GM12878 (cell line): ENCODE measurements at regions of chr5 and their contacts with region 1.

Region 1: DNA sequence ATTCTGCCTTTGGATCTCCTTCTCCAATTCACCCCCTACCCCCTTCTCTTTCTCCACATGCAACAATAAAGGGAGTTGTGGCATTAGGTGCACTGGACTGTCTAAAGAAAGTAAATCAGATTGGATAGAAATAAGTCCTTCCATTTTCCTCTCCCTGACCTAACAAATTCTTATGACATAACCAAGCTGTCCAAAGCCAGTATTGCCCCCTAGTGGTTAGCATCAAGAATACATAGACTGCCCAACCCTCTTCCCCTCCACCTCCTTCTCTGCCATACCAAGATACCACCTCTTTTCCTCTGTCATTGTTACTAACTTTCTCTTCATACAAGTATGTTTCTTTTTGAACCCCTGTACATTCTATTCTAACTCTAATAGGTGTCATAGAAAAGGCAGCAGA is 45.7 kb downstream of the PPARGC1B start:
- DNase-seq: peak; percentile 23
- ATAC-seq: peak; percentile 72
- H3K4me3 ChIP-seq: no peak overlapping the region
- H3K27ac ChIP-seq: peak overlapping the region; percentile 67
- H3K4me1 ChIP-seq: peaks cover 55% of the 10 kb centered on the region
- H3K27me3 ChIP-seq: no peaks in the 10 kb centered on the region
- CTCF ChIP-seq: peak; percentile 62 to 72 (median 63)
- EP300 ChIP-seq: no peak
- POLR2A ChIP-seq: no peak
- RAD21 ChIP-seq: peak; percentile 51

Region 2: DNA sequence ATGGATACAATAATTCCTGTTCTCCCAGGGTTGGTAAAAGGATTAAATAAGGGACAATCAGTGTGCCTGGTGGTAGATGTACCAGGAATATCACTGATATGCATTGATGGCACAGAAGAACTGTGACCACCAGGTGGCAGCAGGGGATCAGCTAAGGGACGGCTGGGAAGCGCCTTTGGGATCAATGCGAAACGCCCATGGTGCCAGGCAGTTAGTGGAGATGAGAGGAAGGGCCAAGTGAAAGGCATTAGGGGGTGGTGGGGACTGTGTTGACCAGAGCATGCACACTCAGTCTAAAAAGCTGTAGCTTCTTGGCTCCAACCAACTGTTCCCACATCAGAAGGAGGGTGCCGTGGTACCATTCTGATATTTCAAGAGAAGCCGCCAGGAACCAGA is 138.9 kb before region 1 on chr5:
- CTCF ChIA-PET with region 1: interaction called, 30 read pairs
- POLR2A ChIA-PET with region 1: interaction called, 3 read pairs
- RAD21 ChIA-PET with region 1: interaction called, 14 read pairs
- SMC1A ChIA-PET with region 1: interaction called, 7 read pairs
- in situ Hi-C with region 1: no loop called
- intact Hi-C with region 1: loop called (anchors 5 kb)
- DNase-seq: no peak
- ATAC-seq: peak; percentile 85
- H3K4me3 ChIP-seq: no peak overlapping the region
- H3K27ac ChIP-seq: no peak overlapping the region
- H3K4me1 ChIP-seq: peaks cover 12% of the 10 kb centered on the region
- H3K27me3 ChIP-seq: no peaks in the 10 kb centered on the region
- CTCF ChIP-seq: peak; percentile 74 to 78 (median 77)
- EP300 ChIP-seq: no peak
- POLR2A ChIP-seq: no peak
- RAD21 ChIP-seq: peak; percentile 87

Region 3: GRCh38 chr5:149680810-149681221 is 95.0 kb before region 1 on chr5:
- CTCF ChIA-PET with region 1: interaction called, 10 read pairs
- POLR2A ChIA-PET with region 1: interaction called, 5 read pairs
- RAD21 ChIA-PET with region 1: interaction called, 5 read pairs
- SMC1A ChIA-PET with region 1: interaction called, 5 read pairs
- in situ Hi-C with region 1: no loop called
- intact Hi-C with region 1: no loop called
- DNase-seq: peak; percentile 84
- ATAC-seq: peak; percentile 99
- H3K4me3 ChIP-seq: no peak overlapping the region
- H3K27ac ChIP-seq: peak overlapping the region; percentile 45
- H3K4me1 ChIP-seq: peaks cover 28% of the 10 kb centered on the region
- H3K27me3 ChIP-seq: peaks cover 0 to under 1% of the 10 kb centered on the region in 2 experiments; a peak in 1 of 4 replicates
- CTCF ChIP-seq: no peak
- EP300 ChIP-seq: peak; percentile 32 to 90; a peak in 3 of 4 replicates
- POLR2A ChIP-seq: no peak
- RAD21 ChIP-seq: no peak

Region 4: DNA sequence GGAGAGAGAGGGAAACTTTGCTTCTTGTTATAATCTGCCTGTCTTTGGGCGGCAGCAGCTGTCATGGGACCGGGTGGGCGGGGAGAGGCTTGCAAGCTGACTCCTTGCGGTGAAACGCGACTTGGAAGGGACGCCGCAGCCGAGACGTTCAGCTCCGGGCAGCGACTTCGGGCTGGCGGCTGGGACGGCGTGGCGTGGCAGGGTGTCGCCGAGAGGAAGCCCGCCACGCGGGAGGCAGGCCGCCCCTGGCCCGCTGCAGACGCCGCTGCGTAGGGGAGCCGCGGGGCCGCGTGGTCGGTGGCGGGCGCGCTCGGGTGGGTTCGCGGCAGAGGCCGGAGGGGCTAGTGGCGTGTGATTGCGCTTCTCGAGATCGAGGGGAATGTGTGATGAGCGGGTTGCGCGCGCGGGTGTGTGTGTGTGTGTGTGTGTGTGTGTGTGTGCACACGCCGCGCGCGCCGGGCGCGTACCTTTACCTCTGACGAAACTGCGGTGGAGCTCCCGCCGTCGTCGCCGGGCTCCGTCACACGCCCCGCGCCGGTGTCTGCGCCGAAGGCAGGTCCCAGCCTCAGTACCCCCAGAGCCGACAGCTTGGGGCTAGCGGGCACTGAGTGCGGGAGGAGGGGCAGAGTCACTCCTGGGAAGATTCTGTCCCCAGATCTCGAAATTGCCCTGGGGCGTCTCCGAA is 44.0 kb before region 1 on chr5:
- CTCF ChIA-PET with region 1: interaction called, 25 read pairs
- POLR2A ChIA-PET with region 1: interaction called, 24 read pairs
- RAD21 ChIA-PET with region 1: interaction called, 51 read pairs
- SMC1A ChIA-PET with region 1: interaction called, 14 read pairs
- in situ Hi-C with region 1: no loop called
- intact Hi-C with region 1: loop called (anchors 2 kb)
- DNase-seq: peak; percentile 62
- ATAC-seq: peak; percentile 77
- H3K4me3 ChIP-seq: peak overlapping the region; percentile 100
- H3K27ac ChIP-seq: peak overlapping the region; percentile 82
- H3K4me1 ChIP-seq: no peaks in the 10 kb centered on the region; the same call in 1 of the 2 replicates
- H3K27me3 ChIP-seq: no peaks in the 10 kb centered on the region
- CTCF ChIP-seq: no peak
- EP300 ChIP-seq: no peak
- POLR2A ChIP-seq: peak; percentile 77
- RAD21 ChIP-seq: no peak

Region 5: DNA sequence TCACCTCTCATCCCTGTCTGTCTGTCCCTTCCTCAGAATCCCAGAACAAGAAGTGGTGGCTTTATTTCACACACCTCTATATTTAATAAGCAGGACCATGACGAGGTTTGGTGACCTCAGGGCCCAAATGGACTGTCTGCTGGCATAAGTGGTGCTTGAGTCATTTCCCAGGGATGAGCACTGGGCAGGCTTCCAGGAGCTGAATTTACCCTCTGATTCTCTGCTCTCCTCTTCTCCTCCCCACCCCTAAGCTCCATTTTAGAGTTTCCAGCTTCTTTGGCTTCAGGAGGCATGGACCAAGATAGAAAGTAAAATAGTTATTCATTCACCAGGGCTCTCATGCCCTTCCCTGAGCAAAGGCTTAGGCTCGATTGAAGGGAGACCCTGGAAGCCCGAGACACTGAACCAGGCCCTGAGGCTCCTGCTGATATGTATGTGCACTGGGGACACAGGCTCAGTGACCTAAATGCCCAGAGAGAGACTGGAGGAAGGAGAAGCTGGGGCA is 23.4 kb after region 1 on chr5:
- CTCF ChIA-PET with region 1: interaction called, 67 read pairs
- POLR2A ChIA-PET with region 1: interaction called, 143 read pairs
- RAD21 ChIA-PET with region 1: interaction called, 109 read pairs
- SMC1A ChIA-PET with region 1: interaction called, 329 read pairs
- in situ Hi-C with region 1: no loop called
- intact Hi-C with region 1: no loop called
- DNase-seq: no peak
- ATAC-seq: no peak
- H3K4me3 ChIP-seq: no peak overlapping the region
- H3K27ac ChIP-seq: peak overlapping the region; percentile 18; the same call in 1 of the 2 replicates
- H3K4me1 ChIP-seq: peaks cover 31% of the 10 kb centered on the region
- H3K27me3 ChIP-seq: no peaks in the 10 kb centered on the region
- CTCF ChIP-seq: no peak
- EP300 ChIP-seq: no peak
- POLR2A ChIP-seq: no peak
- RAD21 ChIP-seq: no peak

Region 6: DNA sequence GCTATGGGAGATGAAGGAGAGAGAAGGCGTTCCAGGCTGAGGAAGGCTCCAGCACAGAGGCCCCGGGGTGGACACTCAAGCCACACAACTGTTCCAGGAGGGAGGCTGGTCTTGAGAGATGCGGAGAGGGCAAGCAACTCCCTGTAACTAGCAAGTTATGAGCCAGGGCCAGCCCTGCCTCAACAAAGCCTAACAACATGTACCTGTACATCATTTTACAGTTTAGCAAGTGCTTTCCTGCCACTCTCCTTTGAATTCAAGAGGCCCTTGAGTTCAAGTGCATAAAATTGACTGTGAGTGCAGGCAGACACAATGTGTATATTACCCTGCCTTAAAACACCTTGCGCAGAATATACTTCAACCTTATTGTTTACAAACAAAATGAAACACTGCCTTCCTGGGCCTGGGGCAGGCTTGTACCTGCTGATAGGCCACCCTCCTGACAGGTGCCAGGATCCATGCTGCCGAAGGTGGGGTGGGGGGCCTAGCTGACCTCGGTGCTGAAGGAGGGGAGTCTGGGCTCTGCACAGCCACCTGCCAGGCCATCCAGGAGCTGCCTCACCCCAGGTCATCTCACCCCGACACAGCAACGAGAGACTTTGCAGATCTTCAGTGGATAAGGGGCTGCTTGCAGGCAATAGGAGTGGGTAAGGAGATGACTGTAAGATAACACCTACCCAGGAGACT is 34.3 kb after region 1 on chr5:
- CTCF ChIA-PET with region 1: interaction called, 67 read pairs
- POLR2A ChIA-PET with region 1: interaction called, 143 read pairs
- RAD21 ChIA-PET with region 1: interaction called, 109 read pairs
- SMC1A ChIA-PET with region 1: interaction called, 329 read pairs
- in situ Hi-C with region 1: no loop called
- intact Hi-C with region 1: loop called (anchors 1 kb)
- DNase-seq: no peak
- ATAC-seq: no peak
- H3K4me3 ChIP-seq: no peak overlapping the region
- H3K27ac ChIP-seq: peak overlapping the region; percentile 55
- H3K4me1 ChIP-seq: peaks cover 43% of the 10 kb centered on the region
- H3K27me3 ChIP-seq: no peaks in the 10 kb centered on the region
- CTCF ChIP-seq: no peak
- EP300 ChIP-seq: no peak
- POLR2A ChIP-seq: no peak
- RAD21 ChIP-seq: no peak

Region 7: DNA sequence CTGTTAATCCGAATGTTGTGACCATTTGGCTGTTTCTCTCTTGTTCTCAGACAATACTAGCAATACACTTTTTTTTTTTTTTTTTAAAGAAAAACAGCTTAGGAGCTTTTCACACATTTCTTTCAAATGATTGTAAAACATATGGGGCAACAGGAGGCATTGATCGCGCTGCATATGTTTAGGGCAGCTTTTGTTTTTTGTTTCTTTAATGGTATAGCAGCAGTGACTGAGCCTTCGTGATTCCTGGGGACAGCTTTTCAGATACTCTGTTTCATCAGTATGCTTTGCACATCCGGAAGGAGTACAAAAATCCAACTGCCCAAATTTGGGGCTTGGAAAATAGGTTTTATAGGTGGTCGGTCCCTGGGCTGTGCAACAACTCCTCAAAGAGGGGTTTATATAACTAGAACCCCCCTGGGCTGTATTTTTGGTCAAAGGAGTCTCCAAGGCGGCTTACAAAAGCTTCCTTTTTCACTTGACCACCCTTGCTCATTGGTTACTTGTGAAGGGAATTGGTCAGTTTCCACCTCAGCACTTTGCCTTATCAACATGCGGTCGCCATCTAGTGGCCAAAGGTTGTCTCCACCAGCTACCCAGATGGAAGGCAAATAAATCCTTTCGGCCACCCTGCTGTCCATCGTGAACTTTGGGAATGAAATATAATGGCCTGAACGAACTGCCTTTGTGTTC is 77.0 kb after region 1 on chr5:
- CTCF ChIA-PET with region 1: interaction called, 12 read pairs
- POLR2A ChIA-PET with region 1: interaction called, 3 read pairs
- RAD21 ChIA-PET with region 1: interaction called, 5 read pairs
- SMC1A ChIA-PET with region 1: interaction called, 6 read pairs
- in situ Hi-C with region 1: no loop called
- intact Hi-C with region 1: no loop called
- DNase-seq: no peak
- ATAC-seq: peak; percentile 96
- H3K4me3 ChIP-seq: no peak overlapping the region
- H3K27ac ChIP-seq: no peak overlapping the region
- H3K4me1 ChIP-seq: no peaks in the 10 kb centered on the region
- H3K27me3 ChIP-seq: no peaks in the 10 kb centered on the region
- CTCF ChIP-seq: peak; percentile 83 to 93 (median 87)
- EP300 ChIP-seq: no peak
- POLR2A ChIP-seq: no peak
- RAD21 ChIP-seq: peak; percentile 83